Heart right ventricle (tissue), 16 donors: ENCODE measurements at regions of chr5 and their contacts with region 1.

Region 1: GRCh38 chr5:57698769-57699168 is 216.2 kb upstream of the ACTBL2 start:
- DNase-seq: no peak
- ATAC-seq: no peak
- H3K4me3 ChIP-seq: no peak overlapping the region
- H3K27ac ChIP-seq: peak overlapping the region in 9 of 10 donors; percentile 57 to 89 (median 78)
- H3K4me1 ChIP-seq: peaks cover 5 to 59% (median 37%) of the 10 kb centered on the region in 9 donors
- H3K27me3 ChIP-seq: no peaks in the 10 kb centered on the region
- CTCF ChIP-seq: no peak

Region 2: GRCh38 chr5:57184322-57184721 is 514.4 kb before region 1 on chr5:
- intact Hi-C with region 1: no loop called
- DNase-seq: no peak
- ATAC-seq: no peak
- H3K4me3 ChIP-seq: no peak overlapping the region
- H3K27ac ChIP-seq: no peak overlapping the region
- H3K4me1 ChIP-seq: peaks cover 9 to 98% (median 87%) of the 10 kb centered on the region in 9 donors
- H3K27me3 ChIP-seq: no peaks in the 10 kb centered on the region
- CTCF ChIP-seq: no peak

Region 3: GRCh38 chr5:57327561-57328394 is 371.0 kb before region 1 on chr5:
- intact Hi-C with region 1: no loop called
- DNase-seq: no peak
- ATAC-seq: no peak
- H3K4me3 ChIP-seq: no peak overlapping the region
- H3K27ac ChIP-seq: no peak overlapping the region
- H3K4me1 ChIP-seq: peaks cover 0 to 26% (median 10%) of the 10 kb centered on the region in 9 donors
- H3K27me3 ChIP-seq: peaks cover 0 to 3% (median 0%) of the 10 kb centered on the region in 7 donors
- CTCF ChIP-seq: no peak

Region 4: DNA sequence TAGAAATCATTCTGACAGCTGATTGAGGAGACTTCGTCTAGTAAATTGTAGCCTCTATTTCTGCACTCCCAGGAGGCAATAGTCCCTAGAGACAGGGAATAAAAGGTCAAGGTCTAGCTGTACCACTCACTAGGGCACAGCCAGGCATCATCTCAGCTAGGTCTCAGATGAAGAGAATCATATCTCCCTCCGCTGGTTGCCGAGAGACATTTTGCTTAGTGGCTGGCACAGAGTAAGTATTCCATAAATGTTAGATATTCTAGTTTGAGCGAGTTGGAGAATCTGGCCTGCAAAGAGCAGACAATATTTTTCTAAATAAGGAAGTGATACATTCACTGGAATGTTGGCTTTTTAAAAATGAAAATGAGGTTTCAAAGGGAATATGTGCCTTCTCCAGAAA is 35.8 kb before region 1 on chr5:
- intact Hi-C with region 1: loop called in 4 of 10 experiments (anchors 2 to 5 kb)
- DNase-seq: peak in 1 of 2 donors; percentile 45
- ATAC-seq: peak; percentile 80 to 95 (median 86)
- H3K4me3 ChIP-seq: no peak overlapping the region
- H3K27ac ChIP-seq: peak overlapping the region in 8 of 10 donors; percentile 24 to 89 (median 76)
- H3K4me1 ChIP-seq: peaks cover 0 to 30% (median 3%) of the 10 kb centered on the region in 9 donors
- H3K27me3 ChIP-seq: no peaks in the 10 kb centered on the region
- CTCF ChIP-seq: peak in 4 of 9 donors; percentile 5 to 40 (median 31)